ENCODE measurements at regions of chr2 and their contacts with region 1.

Region 1: GRCh38 chr2:166127217-166128155 is at the start of gene SCN1A:
- DNase-seq: peak in 1 of 2 experiments; percentile 3
- H3K4me3 ChIP-seq: no peak within 1 kb of the TSS
- H3K27ac ChIP-seq: no peak within 1 kb of the TSS
- H3K4me1 ChIP-seq: no peaks in the 10 kb centered on the region
- H3K27me3 ChIP-seq: no peaks in the 10 kb centered on the region
- CTCF ChIP-seq: peak; percentile 67
- total RNA-seq, gene SCN1A: not detected in 2 replicates

Region 2: GRCh38 chr2:165015052-165015642 is 1112.3 kb before region 1 on chr2:
- CTCF ChIA-PET with region 1: interaction called, 4 read pairs
- POLR2A ChIA-PET with region 1: no interaction called
- intact Hi-C with region 1: loop called (anchors 10 kb)
- DNase-seq: peak in 1 of 2 experiments; percentile 40
- H3K4me3 ChIP-seq: no peak overlapping the region
- H3K27ac ChIP-seq: no peak overlapping the region
- H3K4me1 ChIP-seq: no peaks in the 10 kb centered on the region
- H3K27me3 ChIP-seq: no peaks in the 10 kb centered on the region
- CTCF ChIP-seq: peak; percentile 85

Region 3: DNA sequence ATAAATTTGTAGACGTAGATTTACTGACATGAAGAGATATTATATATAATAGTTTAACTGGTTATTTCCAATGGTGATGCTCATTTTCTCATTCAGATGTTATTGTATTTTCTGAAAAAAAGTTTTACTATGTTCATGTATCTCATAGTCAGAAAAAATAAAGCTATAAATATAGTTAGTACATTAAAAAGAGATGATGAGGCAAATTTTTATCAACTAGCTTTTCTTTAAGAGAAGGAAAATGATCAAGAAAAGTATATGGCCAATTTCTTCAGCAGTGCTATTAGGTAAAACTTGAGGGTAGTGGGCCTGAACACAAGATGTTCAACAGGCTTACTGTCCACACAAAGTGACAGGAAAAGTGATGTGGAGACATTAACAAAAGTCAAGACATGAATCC is 185.7 kb before region 1 on chr2:
- CTCF ChIA-PET with region 1: no interaction called
- POLR2A ChIA-PET with region 1: no interaction called
- intact Hi-C with region 1: no loop called
- DNase-seq: no peak
- H3K4me3 ChIP-seq: no peak overlapping the region
- H3K27ac ChIP-seq: no peak overlapping the region
- H3K4me1 ChIP-seq: no peaks in the 10 kb centered on the region
- H3K27me3 ChIP-seq: no peaks in the 10 kb centered on the region
- CTCF ChIP-seq: no peak

Region 4: DNA sequence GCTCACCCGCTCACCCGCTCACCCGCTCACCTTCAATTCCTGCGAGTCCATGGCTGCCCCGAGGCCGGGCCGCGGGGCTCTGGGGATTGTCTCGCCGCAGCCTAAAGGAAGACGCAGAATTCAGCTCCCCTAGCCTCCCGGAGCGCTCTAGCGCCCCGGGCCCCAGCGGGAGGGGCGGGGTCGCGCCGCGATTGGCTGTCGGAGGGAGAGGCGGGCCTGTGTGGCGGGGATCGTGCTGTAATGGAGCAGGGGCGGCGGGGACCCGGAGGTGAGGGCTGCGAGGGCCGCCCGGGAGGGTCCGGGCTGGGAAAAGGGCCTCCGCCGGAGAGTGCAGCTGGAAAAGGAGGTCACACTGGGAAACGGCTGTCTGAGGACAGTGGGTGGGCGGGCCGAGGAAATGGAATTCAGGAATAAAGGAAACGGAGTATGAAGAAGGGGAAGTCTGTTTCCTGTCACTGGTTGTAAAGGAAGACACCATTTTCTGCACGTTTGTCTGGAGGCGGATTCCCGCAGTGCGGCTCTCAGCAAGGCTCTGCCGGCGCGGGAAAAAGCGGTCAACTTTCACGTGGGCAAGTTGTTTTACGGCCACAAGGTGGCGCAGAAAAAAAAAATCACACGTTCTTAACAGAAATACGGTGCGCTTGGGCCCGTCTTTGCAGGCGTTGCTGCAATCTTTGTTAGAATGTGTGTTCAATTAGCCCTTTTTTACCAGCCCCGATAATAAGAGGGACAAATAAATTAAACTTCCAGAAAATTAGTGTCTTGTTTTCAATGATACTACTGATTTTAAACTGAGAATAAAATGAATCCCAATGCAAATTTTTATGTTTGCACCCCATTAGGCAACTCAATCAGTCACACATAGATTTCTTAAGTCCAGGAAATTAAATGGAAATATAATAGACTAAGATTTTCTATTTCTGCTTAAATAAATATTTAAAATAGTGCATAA is 173.6 kb before region 1 on chr2 and contains the start of gene TTC21B:
- CTCF ChIA-PET with region 1: interaction called, 5 read pairs
- POLR2A ChIA-PET with region 1: no interaction called
- intact Hi-C with region 1: loop called (anchors 5 kb)
- DNase-seq: peak; percentile 75 to 91
- H3K4me3 ChIP-seq: peak within 1 kb of the TSS; percentile 90
- H3K27ac ChIP-seq: no peak within 1 kb of the TSS
- H3K4me1 ChIP-seq: peaks cover 7% of the 10 kb centered on the region
- H3K27me3 ChIP-seq: no peaks in the 10 kb centered on the region
- CTCF ChIP-seq: peak; percentile 80
- total RNA-seq, gene TTC21B: 6.3 and 9.8 TPM in 2 replicates

Region 5: GRCh38 chr2:166081131-166081632 is 46.3 kb before region 1 on chr2:
- CTCF ChIA-PET with region 1: no interaction called
- POLR2A ChIA-PET with region 1: no interaction called
- intact Hi-C with region 1: no loop called
- DNase-seq: no peak
- H3K4me3 ChIP-seq: no peak overlapping the region
- H3K27ac ChIP-seq: no peak overlapping the region
- H3K4me1 ChIP-seq: no peaks in the 10 kb centered on the region
- H3K27me3 ChIP-seq: no peaks in the 10 kb centered on the region
- CTCF ChIP-seq: no peak

Region 6: DNA sequence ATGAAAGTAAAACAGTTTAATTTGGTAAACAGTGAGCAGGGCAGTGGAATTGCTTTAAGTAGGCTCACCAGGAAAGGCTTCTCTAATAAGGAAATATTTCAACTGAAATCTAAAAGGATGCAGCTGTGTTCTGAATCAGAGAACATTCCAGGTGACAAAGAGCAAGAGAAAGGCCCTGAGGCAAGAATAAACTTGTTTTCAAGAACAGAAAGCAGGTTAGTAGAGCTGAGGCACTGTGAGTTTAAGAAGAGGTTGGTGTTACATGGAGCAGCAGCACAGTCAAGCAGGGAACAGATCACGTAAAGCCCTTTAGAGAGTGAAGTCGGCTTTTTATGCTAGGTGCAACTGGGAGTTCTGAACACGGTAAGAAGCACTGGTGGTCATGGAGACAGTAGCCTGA is 57.3 kb after region 1 on chr2:
- CTCF ChIA-PET with region 1: no interaction called
- POLR2A ChIA-PET with region 1: no interaction called
- intact Hi-C with region 1: no loop called
- DNase-seq: peak; percentile 17 to 49
- H3K4me3 ChIP-seq: no peak overlapping the region
- H3K27ac ChIP-seq: no peak overlapping the region
- H3K4me1 ChIP-seq: no peaks in the 10 kb centered on the region
- H3K27me3 ChIP-seq: no peaks in the 10 kb centered on the region
- CTCF ChIP-seq: no peak

Region 7: GRCh38 chr2:166256896-166257295 is 129.4 kb after region 1 on chr2:
- CTCF ChIA-PET with region 1: no interaction called
- POLR2A ChIA-PET with region 1: interaction called, 13 read pairs
- intact Hi-C with region 1: no loop called
- DNase-seq: no peak
- H3K4me3 ChIP-seq: no peak overlapping the region
- H3K27ac ChIP-seq: no peak overlapping the region
- H3K4me1 ChIP-seq: no peaks in the 10 kb centered on the region
- H3K27me3 ChIP-seq: no peaks in the 10 kb centered on the region
- CTCF ChIP-seq: no peak

Region 8: GRCh38 chr2:166625670-166626069 is 498.2 kb after region 1 on chr2:
- CTCF ChIA-PET with region 1: no interaction called
- POLR2A ChIA-PET with region 1: no interaction called
- intact Hi-C with region 1: no loop called
- DNase-seq: no peak
- H3K4me3 ChIP-seq: no peak overlapping the region
- H3K27ac ChIP-seq: no peak overlapping the region
- H3K4me1 ChIP-seq: no peaks in the 10 kb centered on the region
- H3K27me3 ChIP-seq: no peaks in the 10 kb centered on the region
- CTCF ChIP-seq: no peak

Region 9: GRCh38 chr2:167646557-167646956 is 1519.1 kb after region 1 on chr2:
- CTCF ChIA-PET with region 1: interaction called, 11 read pairs
- POLR2A ChIA-PET with region 1: no interaction called
- intact Hi-C with region 1: no loop called
- DNase-seq: no peak
- H3K4me3 ChIP-seq: no peak overlapping the region
- H3K27ac ChIP-seq: no peak overlapping the region
- H3K4me1 ChIP-seq: no peaks in the 10 kb centered on the region
- H3K27me3 ChIP-seq: no peaks in the 10 kb centered on the region
- CTCF ChIP-seq: no peak